CD14-positive monocyte (primary cell): ENCODE measurements at regions of chr5 and their contacts with region 1.

Region 1: GRCh38 chr5:142006363-142007236 is 6.2 kb downstream of the GNPDA1 start:
- DNase-seq: peak; percentile 12 to 37 (median 37)
- H3K4me3 ChIP-seq: no peak overlapping the region
- H3K4me3 Mint-ChIP-seq: no peak overlapping the region
- H3K27ac ChIP-seq: peak overlapping the region in 1 of 2 donors; percentile 27
- H3K27ac Mint-ChIP-seq: peak overlapping the region in 6 of 7 donors; percentile 21 to 81 (median 46)
- H3K4me1 ChIP-seq: peaks cover 11 to 18% of the 10 kb centered on the region in 2 donors
- H3K4me1 Mint-ChIP-seq: peaks cover 20% of the 10 kb centered on the region
- H3K27me3 ChIP-seq: no peaks in the 10 kb centered on the region
- H3K27me3 Mint-ChIP-seq: no peaks in the 10 kb centered on the region
- CTCF ChIP-seq: no peak

Region 2: DNA sequence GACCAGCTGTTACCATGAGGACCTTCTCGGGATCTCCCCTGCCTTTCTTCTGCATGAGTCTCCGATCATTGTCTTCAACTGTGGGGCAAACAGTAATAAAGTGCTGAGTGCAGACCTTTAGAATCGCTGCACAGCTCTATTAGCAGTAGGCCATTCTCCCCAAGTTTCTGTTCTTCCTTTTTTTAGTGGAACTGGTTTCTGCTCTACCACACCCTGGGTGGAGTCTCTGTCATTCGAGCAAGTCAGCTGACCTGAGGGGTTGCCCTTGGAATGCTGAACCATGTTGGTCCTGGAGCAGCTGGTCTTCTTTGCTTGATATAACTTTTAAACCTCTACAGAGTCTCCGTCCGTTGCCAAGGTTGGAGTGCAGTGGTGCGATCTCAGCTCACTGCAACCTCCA is 39.6 kb after region 1 on chr5:
- intact Hi-C with region 1: no loop called
- DNase-seq: peak in 2 of 3 donors; percentile 36 to 37
- H3K4me3 ChIP-seq: no peak overlapping the region
- H3K4me3 Mint-ChIP-seq: peak overlapping the region in 1 of 2 donors; percentile 42
- H3K27ac ChIP-seq: peak overlapping the region; percentile 14 to 45
- H3K27ac Mint-ChIP-seq: peak overlapping the region; percentile 21 to 87 (median 60)
- H3K4me1 ChIP-seq: peaks cover 15 to 16% of the 10 kb centered on the region in 2 donors
- H3K4me1 Mint-ChIP-seq: peaks cover 6% of the 10 kb centered on the region
- H3K27me3 ChIP-seq: no peaks in the 10 kb centered on the region
- H3K27me3 Mint-ChIP-seq: peaks cover 0 to 3% (median 2%) of the 10 kb centered on the region in 3 donors
- CTCF ChIP-seq: no peak

Region 3: DNA sequence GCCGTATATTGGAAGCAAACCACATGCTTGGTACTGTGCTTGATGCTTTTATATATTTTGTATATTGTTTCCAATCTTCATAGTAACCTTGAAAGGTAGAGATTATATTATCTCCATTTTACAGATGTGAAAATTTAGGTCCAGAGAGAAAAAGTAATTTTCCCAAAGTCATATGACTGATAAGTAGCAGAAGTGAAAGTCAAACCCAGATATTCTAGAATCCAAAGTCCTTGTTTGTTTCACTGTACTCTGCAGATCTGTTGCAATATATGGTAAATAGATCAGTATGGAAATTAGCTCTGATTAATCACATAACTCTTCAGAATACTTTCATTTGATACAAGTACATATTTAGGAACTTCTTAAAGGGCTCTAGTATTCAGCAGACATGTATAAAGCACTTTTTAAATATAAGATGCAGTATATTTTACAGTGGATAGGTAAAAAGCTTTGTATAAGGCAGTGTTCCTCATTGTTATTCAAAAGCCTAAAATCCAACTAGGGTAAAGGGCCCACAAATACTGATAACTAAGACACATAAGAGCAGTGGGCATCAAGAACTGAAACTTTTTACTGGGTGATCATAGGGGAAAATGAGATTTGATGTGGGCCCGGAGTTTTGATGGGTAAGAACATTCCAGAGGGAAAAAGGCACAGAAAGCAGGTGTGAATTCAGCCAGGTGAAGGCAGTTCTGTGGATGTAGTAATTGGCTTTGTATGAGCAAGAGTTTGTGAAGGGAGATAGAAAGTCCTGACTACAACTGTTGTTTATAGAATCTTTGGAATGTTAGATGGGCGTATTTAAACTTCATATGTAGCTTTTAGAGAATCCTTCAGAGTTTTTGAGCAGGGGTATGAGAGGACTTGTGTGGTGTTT is 127.0 kb after region 1 on chr5:
- intact Hi-C with region 1: loop called in 1 of 2 experiments (anchors 5 kb)
- DNase-seq: peak in 2 of 3 donors; percentile 22 to 46
- H3K4me3 ChIP-seq: peak overlapping the region in 1 of 3 experiments; percentile 61
- H3K4me3 Mint-ChIP-seq: no peak overlapping the region
- H3K27ac ChIP-seq: peak overlapping the region in 1 of 2 donors; percentile 72
- H3K27ac Mint-ChIP-seq: no peak overlapping the region
- H3K4me1 ChIP-seq: peaks cover 20 to 27% of the 10 kb centered on the region in 2 donors
- H3K4me1 Mint-ChIP-seq: peaks cover 5% of the 10 kb centered on the region
- H3K27me3 ChIP-seq: no peaks in the 10 kb centered on the region
- H3K27me3 Mint-ChIP-seq: no peaks in the 10 kb centered on the region
- CTCF ChIP-seq: no peak